Activated naive CD4-positive, alpha-beta T cell treated with anti-CD3 and anti-CD28 coated beads for 36 hours (primary cell): ENCODE measurements at regions of chr19 and their contacts with region 1.

Region 1: DNA sequence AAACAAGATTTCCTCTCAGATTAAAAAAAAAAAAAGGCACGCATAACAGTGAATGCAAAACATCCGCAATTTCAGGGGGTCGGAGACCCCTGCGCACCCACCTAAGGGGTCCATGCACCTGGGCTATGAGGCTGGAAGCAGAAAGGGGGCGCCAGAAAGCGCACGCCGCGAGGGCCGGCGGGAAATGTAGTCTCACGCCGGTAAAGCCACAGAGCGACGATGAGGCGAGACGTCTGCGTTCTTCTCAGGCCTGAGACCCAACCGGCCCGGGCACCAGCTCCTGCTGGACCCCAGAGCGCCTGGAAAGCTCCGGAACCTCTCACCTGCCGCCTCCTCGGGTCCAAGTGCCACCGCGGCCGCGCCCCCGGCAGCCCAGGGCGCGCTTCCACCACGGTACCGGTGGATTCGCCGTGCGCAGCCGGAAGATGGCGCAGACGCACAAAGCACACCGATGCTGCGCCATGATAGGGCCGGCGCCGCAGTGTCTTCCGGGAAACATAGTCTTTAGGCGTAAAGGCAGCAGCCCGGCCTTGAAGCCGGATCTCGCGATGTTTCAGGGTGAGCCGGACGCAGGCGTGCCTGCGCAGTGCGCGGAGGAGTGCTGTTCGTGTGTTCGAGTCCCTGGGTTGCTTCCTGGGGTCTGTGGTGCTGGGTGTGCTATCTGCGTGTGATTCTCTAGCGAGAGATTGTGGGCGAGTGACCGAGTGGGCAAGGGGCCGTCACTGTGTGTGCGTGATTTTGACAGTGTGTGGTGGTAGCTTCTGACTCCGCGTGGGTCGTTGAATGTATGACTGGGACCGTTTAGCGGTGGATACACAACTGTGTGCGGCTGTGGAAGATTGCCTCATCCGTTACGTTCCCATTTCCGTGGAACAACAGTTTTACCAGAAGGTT is at the start of gene ZNF582:
- DNase-seq: peak; percentile 96
- H3K4me3 Mint-ChIP-seq: peak within 1 kb of the TSS; percentile 87
- H3K27ac Mint-ChIP-seq: peak within 1 kb of the TSS; percentile 92
- H3K4me1 Mint-ChIP-seq: peaks cover 12% of the 10 kb centered on the region
- H3K27me3 Mint-ChIP-seq: no peaks in the 10 kb centered on the region
- total RNA-seq, gene ZNF582: 1.1 to 2.2 TPM

Region 2: DNA sequence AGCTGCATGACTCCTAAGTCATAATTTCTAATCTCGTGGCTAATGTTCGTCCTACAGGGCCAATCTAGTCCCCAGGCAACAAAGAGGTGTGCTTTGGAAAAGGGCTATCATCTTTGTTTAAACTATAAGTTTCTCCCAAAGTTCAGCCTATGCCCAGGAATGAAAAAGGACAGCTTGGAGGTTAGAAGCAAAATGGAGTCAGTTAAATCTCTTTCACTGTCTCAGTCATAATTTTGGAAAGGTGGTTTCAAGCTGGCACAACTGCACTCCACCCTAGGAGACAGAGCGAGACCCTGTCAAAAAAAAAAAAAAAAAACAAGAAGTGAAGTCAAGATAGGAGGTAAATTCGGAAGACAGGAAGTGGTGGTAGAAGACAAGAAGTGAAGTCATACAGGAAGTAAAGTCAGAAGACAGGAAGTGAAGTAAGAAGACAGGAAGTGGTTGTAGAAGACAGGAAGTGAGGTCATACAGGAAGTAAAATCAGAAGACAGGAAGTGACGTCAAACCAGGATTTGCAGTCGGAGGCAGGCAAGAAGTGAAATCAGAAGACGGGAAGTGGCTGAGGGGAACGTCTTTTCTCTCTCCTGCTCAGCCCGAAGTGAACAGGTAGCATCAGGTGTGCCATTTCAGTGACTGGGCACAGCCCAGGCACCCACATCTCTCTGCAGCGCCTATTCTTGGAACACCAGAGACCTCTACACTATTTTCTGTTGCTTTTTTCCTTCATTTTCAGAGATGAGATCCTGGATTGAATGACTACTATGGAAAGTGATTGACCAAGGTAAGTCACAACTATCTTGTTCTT is 1387.5 kb before region 1 on chr19:
- CTCF ChIA-PET with region 1: no interaction called
- intact Hi-C with region 1: loop called (anchors 10 kb)
- DNase-seq: peak; percentile 66
- H3K4me3 Mint-ChIP-seq: peak overlapping the region; percentile 81
- H3K27ac Mint-ChIP-seq: peak overlapping the region; percentile 77
- H3K4me1 Mint-ChIP-seq: peaks cover 23% of the 10 kb centered on the region
- H3K27me3 Mint-ChIP-seq: peaks cover 18% of the 10 kb centered on the region

Region 3: DNA sequence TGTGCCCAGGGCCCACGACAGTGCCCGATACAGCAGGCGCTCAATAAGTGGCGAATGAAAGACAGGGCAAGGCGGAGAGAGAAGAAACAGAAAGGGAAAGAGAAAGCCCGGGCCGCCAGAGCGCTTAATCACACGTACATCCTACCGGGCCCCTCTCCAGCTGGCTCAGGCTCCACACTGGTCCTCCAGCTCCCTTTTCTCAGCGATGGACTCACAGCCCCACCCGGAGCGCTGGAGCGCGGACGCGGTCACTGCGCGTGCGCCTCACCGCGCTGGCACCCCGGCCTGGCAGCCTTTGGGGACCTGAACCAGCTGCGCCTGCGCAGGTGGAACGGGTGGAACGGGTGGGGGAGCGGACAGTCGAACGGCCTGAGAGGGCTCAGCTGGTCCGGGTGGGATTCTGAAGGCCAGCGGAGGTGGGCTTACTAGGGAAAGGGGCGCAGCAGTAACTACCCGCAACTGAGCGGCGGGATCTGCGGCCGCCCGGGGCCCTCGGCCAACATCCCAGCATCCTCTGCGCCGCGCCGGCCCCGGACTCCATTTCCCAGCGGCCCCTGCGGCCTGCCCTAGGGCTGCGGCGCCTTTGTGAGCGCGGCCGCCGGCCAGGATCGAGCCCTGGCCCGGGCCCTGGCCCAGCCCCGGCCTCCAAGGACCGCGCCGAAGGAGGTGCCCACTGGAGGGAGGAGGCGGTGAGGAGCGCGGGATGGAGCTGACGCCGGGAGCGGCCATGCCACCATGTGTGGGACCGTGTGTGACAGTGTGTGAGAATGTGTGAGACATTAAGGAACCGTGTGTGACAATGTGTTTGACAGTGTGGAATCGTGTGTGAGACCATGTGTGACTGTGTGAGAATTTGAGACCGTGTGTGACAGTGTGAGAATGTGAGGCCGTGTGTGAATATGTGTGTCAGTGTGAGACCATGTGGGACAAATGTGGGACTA is 10.7 kb after region 1 on chr19 and contains the start of gene ZNF583:
- CTCF ChIA-PET with region 1: no interaction called
- intact Hi-C with region 1: loop called (anchors 1 kb)
- DNase-seq: peak; percentile 88
- H3K4me3 Mint-ChIP-seq: peak within 1 kb of the TSS; percentile 85
- H3K27ac Mint-ChIP-seq: peak within 1 kb of the TSS; percentile 96
- H3K4me1 Mint-ChIP-seq: peaks cover 32% of the 10 kb centered on the region
- H3K27me3 Mint-ChIP-seq: no peaks in the 10 kb centered on the region
- total RNA-seq, gene ZNF583: 0.55 to 1.2 TPM

Region 4: DNA sequence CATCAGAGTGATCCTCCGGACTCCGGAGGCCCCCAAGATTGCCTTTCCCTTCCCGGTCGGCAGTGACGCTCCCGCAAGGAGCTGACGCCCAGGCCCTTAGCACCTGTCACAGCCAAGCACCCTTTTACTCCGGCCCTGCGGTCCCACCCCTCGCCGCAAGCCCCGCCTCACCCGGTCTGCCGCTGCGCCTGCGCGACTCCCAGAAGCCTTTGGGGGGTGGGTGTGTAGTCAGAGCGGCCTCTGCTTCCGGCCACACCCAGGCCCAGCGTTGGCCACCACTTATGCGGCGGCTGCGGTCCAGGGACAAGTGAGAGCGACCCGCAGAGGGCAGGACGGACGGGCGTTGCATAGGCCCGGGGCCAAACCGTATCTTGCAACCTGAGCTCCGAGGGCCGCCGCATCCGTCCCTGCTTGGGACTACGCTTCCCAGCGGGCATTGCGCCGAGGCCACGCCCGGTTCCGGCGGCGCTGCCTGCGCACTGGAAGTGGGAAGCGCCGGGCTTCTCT is 144.9 kb after region 1 on chr19:
- CTCF ChIA-PET with region 1: no interaction called
- intact Hi-C with region 1: loop called (anchors 2 kb)
- DNase-seq: peak; percentile 91
- H3K4me3 Mint-ChIP-seq: peak overlapping the region; percentile 83
- H3K27ac Mint-ChIP-seq: peak overlapping the region; percentile 88
- H3K4me1 Mint-ChIP-seq: peaks cover 16% of the 10 kb centered on the region
- H3K27me3 Mint-ChIP-seq: no peaks in the 10 kb centered on the region

Region 5: GRCh38 chr19:56594783-56595547 is 201.6 kb after region 1 on chr19 and contains the start of gene ZNF71:
- CTCF ChIA-PET with region 1: no interaction called
- intact Hi-C with region 1: loop called (anchors 1 kb)
- DNase-seq: peak; percentile 91
- H3K4me3 Mint-ChIP-seq: peak within 1 kb of the TSS; percentile 92
- H3K27ac Mint-ChIP-seq: peak within 1 kb of the TSS; percentile 52
- H3K4me1 Mint-ChIP-seq: peaks cover 21% of the 10 kb centered on the region
- H3K27me3 Mint-ChIP-seq: no peaks in the 10 kb centered on the region
- total RNA-seq, gene ZNF71: 2.5 to 3.0 TPM

Region 6: DNA sequence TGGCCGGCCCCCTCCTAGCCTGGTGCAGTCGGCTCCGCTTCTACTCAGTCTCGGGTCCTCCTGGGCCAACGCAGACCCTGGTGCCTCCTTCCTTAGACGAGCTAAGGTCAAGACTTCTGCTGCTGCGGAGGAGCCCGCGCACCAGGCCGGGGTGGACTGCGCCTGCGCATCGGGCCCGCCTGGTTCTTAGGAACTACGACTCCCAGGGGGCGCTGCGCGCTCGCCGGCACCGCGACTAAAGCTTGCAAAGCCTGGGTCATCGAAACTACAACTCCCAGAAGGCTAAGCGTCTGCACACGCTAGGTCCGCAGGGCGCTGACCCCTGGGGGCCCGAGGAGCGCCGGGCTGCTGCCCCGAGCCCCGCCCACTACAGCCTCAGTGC is 278.2 kb after region 1 on chr19 and contains the start of gene ZNF835:
- CTCF ChIA-PET with region 1: no interaction called
- intact Hi-C with region 1: loop called (anchors 2 kb)
- DNase-seq: peak; percentile 85
- H3K4me3 Mint-ChIP-seq: peak within 1 kb of the TSS; percentile 88
- H3K27ac Mint-ChIP-seq: peak within 1 kb of the TSS; percentile 63
- H3K4me1 Mint-ChIP-seq: peaks cover 12% of the 10 kb centered on the region
- H3K27me3 Mint-ChIP-seq: no peaks in the 10 kb centered on the region
- total RNA-seq, gene ZNF835: 0.67 to 1.3 TPM